Activated CD4-positive, alpha-beta memory T cell treated with anti-CD3 and anti-CD28 coated beads, Interleukin-2, amount 10 ng/mL, durations not matched to agents 7 days and 5 days (primary cell): ENCODE measurements at regions of chr19 and their contacts with region 1.

Region 1: DNA sequence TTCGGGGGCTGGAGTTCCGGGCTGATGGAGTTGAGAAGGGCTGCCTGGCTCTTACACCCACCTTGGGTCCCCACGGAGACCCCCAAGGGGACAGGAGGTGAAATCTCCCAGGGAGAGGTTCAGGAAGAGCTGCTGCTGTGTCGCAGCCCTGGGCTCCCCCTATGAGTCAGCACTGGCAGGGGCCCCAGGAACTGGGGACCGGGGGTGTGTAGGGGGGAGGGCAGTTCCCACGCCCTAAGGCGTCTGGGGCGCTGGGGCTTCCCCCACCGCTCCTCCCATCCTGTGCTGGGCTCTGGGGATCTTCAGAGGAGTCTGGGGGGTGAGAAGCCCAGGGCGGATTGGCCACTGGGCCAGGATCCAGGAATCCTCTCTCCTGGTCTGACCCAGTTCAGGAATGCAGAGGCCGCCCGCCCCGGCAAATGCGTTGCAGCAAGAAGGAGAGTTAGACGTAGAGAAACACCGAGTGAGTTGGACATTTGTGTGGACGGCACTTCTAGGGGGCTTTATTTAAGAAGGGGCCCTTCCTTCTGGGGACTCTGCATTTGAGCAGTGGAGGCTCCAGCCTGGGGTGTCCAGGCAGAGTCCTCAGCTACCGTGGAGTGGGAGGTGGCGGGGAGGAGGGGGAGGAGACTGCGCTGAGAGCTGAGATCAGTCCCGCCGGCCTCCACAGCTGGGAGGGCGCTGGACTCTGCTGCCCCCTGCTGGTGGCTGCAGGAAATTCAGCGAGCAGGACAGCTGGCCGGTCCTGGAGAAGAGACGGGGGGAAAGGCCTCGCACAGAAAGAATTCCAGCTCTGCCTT is 15.0 kb upstream of the NANOS3 start:
- DNase-seq: peak; percentile 92
- H3K4me3 Mint-ChIP-seq: peak overlapping the region; percentile 89
- H3K27ac Mint-ChIP-seq: peak overlapping the region; percentile 89
- H3K4me1 Mint-ChIP-seq: peaks cover 49% of the 10 kb centered on the region
- H3K27me3 Mint-ChIP-seq: peaks cover 24% of the 10 kb centered on the region

Region 2: DNA sequence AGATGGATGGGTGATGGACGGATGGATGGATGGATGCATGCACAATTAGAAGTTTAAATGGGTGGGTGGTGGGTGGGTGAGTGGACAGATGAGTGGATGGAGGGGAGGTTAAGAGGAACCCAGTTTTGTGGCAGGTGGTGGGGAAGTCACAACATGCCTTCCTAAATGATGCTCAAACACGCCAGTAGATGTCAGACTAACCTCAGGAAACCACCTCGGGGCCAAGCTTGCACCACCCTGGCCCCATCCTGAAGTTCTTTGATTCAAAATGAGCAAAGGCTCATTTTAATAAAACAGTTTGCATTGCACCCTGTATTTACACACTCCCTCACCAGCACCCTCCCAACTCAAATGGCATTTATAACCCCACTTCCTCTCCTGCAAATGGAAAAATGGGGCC is 264.3 kb before region 1 on chr19:
- CTCF ChIA-PET with region 1: interaction called, 11 read pairs
- POLR2A ChIA-PET with region 1: interaction called, 3 read pairs
- DNase-seq: peak; percentile 57
- H3K4me3 Mint-ChIP-seq: no peak overlapping the region
- H3K27ac Mint-ChIP-seq: no peak overlapping the region
- H3K4me1 Mint-ChIP-seq: peaks cover 2% of the 10 kb centered on the region
- H3K27me3 Mint-ChIP-seq: peaks cover 9% of the 10 kb centered on the region

Region 3: GRCh38 chr19:13644645-13645044 is 217.3 kb before region 1 on chr19:
- CTCF ChIA-PET with region 1: no interaction called
- POLR2A ChIA-PET with region 1: no interaction called
- DNase-seq: no peak
- H3K4me3 Mint-ChIP-seq: no peak overlapping the region
- H3K27ac Mint-ChIP-seq: no peak overlapping the region
- H3K4me1 Mint-ChIP-seq: no peaks in the 10 kb centered on the region
- H3K27me3 Mint-ChIP-seq: peaks cover 3% of the 10 kb centered on the region

Region 4: GRCh38 chr19:13774217-13775191 is 87.4 kb before region 1 on chr19 and contains the start of gene C19orf53:
- CTCF ChIA-PET with region 1: interaction called, 18 read pairs
- POLR2A ChIA-PET with region 1: interaction called, 12 read pairs
- DNase-seq: peak; percentile 91
- H3K4me3 Mint-ChIP-seq: peak within 1 kb of the TSS; percentile 97
- H3K27ac Mint-ChIP-seq: peak within 1 kb of the TSS; percentile 84
- H3K4me1 Mint-ChIP-seq: peaks cover 23% of the 10 kb centered on the region
- H3K27me3 Mint-ChIP-seq: no peaks in the 10 kb centered on the region
- total RNA-seq, gene C19orf53: 79.4 to 83.7 TPM

Region 5: DNA sequence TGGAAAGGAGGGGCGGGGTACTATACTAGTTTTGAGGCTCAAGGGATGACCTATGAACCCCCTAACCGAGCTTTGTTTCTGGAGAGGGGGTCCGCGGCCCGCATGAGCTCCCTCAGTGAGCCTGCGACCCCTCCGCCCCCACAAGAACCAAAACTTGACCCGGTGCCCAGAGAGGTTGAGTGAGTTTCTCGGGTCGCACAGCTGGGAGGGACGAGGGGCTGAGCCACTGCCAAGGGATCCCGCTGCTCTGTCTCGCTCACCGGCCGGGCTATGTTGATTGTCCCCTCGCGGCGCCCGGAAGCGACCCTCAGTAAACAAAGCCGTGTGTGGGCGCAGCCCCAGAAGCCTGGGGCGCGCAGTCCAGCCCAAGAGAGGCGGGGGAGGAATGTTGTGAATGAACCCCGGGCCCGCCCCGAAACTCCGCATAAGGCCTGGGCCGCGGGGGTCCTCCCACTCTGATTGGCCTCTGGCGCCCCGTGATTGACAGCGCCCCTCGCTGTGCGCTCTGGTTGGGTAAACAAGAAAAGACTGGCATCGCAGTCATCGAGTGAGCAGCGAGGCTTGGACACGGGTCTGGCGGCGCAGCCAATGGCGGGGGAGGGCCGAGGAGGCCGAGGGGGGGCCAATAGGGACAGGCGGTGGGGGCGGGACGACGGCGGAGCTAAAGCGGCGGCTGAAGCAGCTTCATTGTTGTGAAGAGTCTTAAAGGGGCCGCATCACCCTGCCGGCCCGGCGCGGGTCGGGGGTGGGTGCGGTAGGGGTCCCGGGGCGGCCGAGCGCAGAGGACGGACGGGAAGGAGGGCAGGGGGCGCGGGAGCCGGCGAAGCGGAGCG is 67.0 kb before region 1 on chr19 and contains the start of gene ZSWIM4:
- CTCF ChIA-PET with region 1: interaction called, 190 read pairs
- POLR2A ChIA-PET with region 1: interaction called, 10 read pairs
- DNase-seq: peak; percentile 98
- H3K4me3 Mint-ChIP-seq: peak within 1 kb of the TSS; percentile 99
- H3K27ac Mint-ChIP-seq: peak within 1 kb of the TSS; percentile 93
- H3K4me1 Mint-ChIP-seq: peaks cover 35% of the 10 kb centered on the region
- H3K27me3 Mint-ChIP-seq: no peaks in the 10 kb centered on the region
- total RNA-seq, gene ZSWIM4: 10.1 to 10.4 TPM

Region 6: DNA sequence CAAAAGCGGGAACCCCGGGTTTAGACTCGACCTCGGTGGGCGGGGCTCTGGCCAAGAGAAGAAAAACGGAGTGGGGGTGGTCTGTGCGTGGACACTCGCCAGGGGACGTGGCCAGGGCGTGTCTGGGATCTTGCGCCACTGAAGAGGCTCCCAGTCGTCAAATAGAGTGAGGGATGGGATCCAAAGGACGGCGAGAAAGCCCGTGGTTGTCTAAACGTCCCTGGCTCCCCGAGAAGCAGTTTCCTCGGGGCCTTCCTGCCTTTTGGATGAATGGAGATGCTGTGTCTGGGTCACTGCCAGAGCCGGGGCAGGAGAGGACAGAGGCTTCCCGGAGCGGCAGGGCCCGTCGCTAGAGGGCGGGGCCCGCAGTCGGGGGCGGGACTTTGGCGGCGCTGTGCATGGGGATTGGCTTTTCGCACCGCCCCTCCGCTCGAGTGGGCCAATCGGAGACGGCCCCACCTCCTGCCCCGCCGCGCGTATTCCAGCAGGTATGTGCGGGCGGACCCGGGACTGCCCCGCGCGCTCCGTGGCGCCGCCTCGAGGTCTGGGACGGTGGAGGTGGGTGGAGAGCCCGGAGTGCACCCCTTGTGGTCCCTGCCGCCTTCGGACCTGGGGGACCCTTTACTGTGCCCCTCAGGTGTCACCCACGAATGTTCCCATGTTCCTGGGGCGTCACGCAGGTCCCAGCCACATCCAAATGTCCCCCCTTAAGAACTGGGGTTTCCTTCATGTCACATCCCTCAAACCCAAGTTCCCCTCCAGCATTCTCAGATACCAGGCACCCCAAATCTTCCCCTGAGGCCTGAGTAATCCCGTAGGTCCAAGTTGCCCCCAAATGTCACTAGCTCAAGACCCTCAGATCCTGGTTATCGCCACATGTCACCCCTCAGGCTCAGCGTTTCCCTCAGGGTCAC is 28.3 kb before region 1 on chr19:
- CTCF ChIA-PET with region 1: interaction called, 27 read pairs
- POLR2A ChIA-PET with region 1: interaction called, 28 read pairs
- DNase-seq: peak; percentile 94
- H3K4me3 Mint-ChIP-seq: peak overlapping the region; percentile 74
- H3K27ac Mint-ChIP-seq: peak overlapping the region; percentile 70
- H3K4me1 Mint-ChIP-seq: peaks cover 47% of the 10 kb centered on the region
- H3K27me3 Mint-ChIP-seq: no peaks in the 10 kb centered on the region

Region 7: GRCh38 chr19:13846557-13847406 is 15.2 kb before region 1 on chr19:
- CTCF ChIA-PET with region 1: interaction called, 21 read pairs
- POLR2A ChIA-PET with region 1: interaction called, 28 read pairs
- DNase-seq: peak; percentile 96
- H3K4me3 Mint-ChIP-seq: peak overlapping the region; percentile 80
- H3K27ac Mint-ChIP-seq: peak overlapping the region; percentile 99
- H3K4me1 Mint-ChIP-seq: peaks cover 59% of the 10 kb centered on the region
- H3K27me3 Mint-ChIP-seq: no peaks in the 10 kb centered on the region

Region 8: DNA sequence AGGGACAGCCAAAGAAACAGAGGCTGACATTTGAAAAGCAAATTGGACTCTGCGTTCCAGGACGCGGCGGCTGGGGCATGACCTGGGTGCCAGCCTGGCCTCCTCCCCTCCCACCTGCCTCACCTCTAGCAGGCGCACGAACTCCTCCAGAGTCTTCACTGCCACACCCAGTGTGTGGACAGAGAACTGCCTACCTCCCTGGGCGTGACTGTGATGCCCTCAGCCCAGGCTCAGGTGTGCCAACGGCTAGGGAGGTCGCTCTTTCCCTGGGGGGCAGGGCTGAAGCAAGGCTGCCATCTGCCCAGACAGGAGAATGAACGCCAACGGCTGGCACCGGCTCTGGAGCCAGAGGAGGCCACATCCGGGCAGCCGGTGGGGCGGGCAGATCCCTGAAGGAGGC is 26.3 kb after region 1 on chr19:
- CTCF ChIA-PET with region 1: no interaction called
- POLR2A ChIA-PET with region 1: no interaction called
- DNase-seq: no peak
- H3K4me3 Mint-ChIP-seq: no peak overlapping the region
- H3K27ac Mint-ChIP-seq: no peak overlapping the region
- H3K4me1 Mint-ChIP-seq: peaks cover 14% of the 10 kb centered on the region
- H3K27me3 Mint-ChIP-seq: no peaks in the 10 kb centered on the region